Mammary epithelial cell (primary cell): ENCODE measurements at regions of chr7 and their contacts with region 1.

Region 1: GRCh38 chr7:136953386-136953785 is 84.9 kb downstream of the CHRM2 start:
- DNase-seq: no peak
- H3K4me3 ChIP-seq: no peak overlapping the region
- H3K27ac ChIP-seq: no peak overlapping the region
- H3K4me1 ChIP-seq: no peaks in the 10 kb centered on the region
- H3K27me3 ChIP-seq: no peaks in the 10 kb centered on the region
- CTCF ChIP-seq: no peak

Region 2: DNA sequence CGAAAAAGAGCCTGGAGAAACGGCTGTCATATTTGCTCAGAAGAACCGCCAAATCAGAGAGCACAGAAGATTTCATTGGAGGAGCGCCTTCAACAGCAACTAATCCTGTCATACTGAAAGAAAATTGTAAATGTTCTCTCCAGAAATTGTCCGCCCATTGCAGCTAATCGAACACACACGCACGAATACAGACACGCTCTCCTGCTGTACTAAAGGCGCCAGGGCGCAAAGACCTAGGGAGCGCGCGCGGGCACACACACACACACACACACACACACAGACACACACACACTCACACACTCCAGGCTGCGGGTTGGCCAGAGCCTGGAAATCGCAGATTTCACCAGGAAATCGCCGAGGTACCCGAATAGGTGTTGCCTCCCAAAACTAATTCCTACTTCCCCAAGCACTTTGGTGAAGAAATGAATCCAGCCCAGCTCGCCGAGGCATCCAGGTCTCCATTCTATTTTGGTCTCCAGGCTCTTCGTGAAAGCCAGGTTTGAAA is 84.8 kb before region 1 on chr7 and contains the start of gene CHRM2:
- CTCF ChIA-PET with region 1: no interaction called
- dilution Hi-C with region 1: no loop called
- in situ Hi-C with region 1: no loop called
- intact Hi-C with region 1: no loop called
- DNase-seq: peak; percentile 31
- H3K4me3 ChIP-seq: no peak within 1 kb of the TSS
- H3K27ac ChIP-seq: no peak within 1 kb of the TSS
- H3K4me1 ChIP-seq: no peaks in the 10 kb centered on the region
- H3K27me3 ChIP-seq: peaks cover 43% of the 10 kb centered on the region
- CTCF ChIP-seq: no peak
- total RNA-seq, gene CHRM2: not detected

Region 3: DNA sequence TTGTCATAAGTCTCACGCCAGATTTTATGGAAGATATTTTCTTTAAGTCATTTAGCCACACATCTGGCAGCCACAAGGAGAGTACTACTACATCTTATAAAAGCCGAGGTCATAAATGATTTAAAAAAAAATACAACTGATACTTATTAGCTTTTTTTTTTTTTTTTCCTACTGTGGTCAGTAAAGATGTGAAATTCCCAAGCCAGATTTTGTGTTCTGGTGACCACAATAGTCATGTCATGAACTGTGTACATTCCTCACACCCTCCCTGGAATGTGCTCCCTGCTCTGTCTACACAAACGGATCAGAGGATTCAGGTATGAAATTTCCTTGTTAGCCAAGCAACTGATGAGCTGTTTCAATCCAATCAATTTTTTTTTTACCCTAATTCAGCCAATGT is 30.3 kb before region 1 on chr7:
- CTCF ChIA-PET with region 1: interaction called, 13 read pairs
- dilution Hi-C with region 1: no loop called
- in situ Hi-C with region 1: no loop called
- intact Hi-C with region 1: no loop called
- DNase-seq: peak; percentile 25
- H3K4me3 ChIP-seq: no peak overlapping the region
- H3K27ac ChIP-seq: no peak overlapping the region
- H3K4me1 ChIP-seq: no peaks in the 10 kb centered on the region
- H3K27me3 ChIP-seq: no peaks in the 10 kb centered on the region
- CTCF ChIP-seq: no peak

Region 4: GRCh38 chr7:136964347-136964746 is 11.0 kb after region 1 on chr7:
- CTCF ChIA-PET with region 1: no interaction called
- dilution Hi-C with region 1: no loop called
- in situ Hi-C with region 1: no loop called
- intact Hi-C with region 1: no loop called
- DNase-seq: no peak
- H3K4me3 ChIP-seq: no peak overlapping the region
- H3K27ac ChIP-seq: no peak overlapping the region
- H3K4me1 ChIP-seq: no peaks in the 10 kb centered on the region
- H3K27me3 ChIP-seq: peaks cover 3% of the 10 kb centered on the region
- CTCF ChIP-seq: no peak

Region 5: GRCh38 chr7:137025469-137026175 is 72.2 kb after region 1 on chr7:
- CTCF ChIA-PET with region 1: no interaction called
- dilution Hi-C with region 1: no loop called
- in situ Hi-C with region 1: no loop called
- intact Hi-C with region 1: no loop called
- DNase-seq: no peak
- H3K4me3 ChIP-seq: no peak overlapping the region
- H3K27ac ChIP-seq: no peak overlapping the region
- H3K4me1 ChIP-seq: no peaks in the 10 kb centered on the region
- H3K27me3 ChIP-seq: peaks cover 2% of the 10 kb centered on the region
- CTCF ChIP-seq: no peak